ENCODE measurements at regions of chr2 and their contacts with region 1.

Region 1: GRCh38 chr2:20446917-20447436 is at the start of gene RHOB:
- DNase-seq: peak; percentile 97 to 99
- ATAC-seq: peak; percentile 73 to 84
- H3K4me3 ChIP-seq: peak within 1 kb of the TSS; percentile 86 to 99 (median 94)
- H3K27ac ChIP-seq: peak within 1 kb of the TSS; percentile 87 to 96 (median 91)
- H3K4me1 ChIP-seq: peaks cover 19 to 20% of the 10 kb centered on the region in 2 donors
- H3K27me3 ChIP-seq: no peaks in the 10 kb centered on the region
- CTCF ChIP-seq: peak in 1 of 5 experiments; percentile 4
- POLR2A ChIP-seq: peak; percentile 100
- total RNA-seq, gene RHOB: 696 to 1,267 (median 1,094) TPM

Region 2: GRCh38 chr2:19046986-19047780 is 1399.8 kb before region 1 on chr2:
- in situ Hi-C with region 1: no loop called
- intact Hi-C with region 1: loop called (anchors 5 kb)
- DNase-seq: peak; percentile 70 to 72
- ATAC-seq: peak; percentile 99 to 100
- H3K4me3 ChIP-seq: no peak overlapping the region
- H3K27ac ChIP-seq: peak overlapping the region; percentile 71 to 76 (median 72)
- H3K4me1 ChIP-seq: peaks cover 31 to 35% of the 10 kb centered on the region in 2 donors
- H3K27me3 ChIP-seq: no peaks in the 10 kb centered on the region
- CTCF ChIP-seq: no peak
- POLR2A ChIP-seq: no peak

Region 3: GRCh38 chr2:20398956-20399567 is 47.9 kb before region 1 on chr2:
- in situ Hi-C with region 1: no loop called
- intact Hi-C with region 1: no loop called
- DNase-seq: no peak
- ATAC-seq: no peak
- H3K4me3 ChIP-seq: no peak overlapping the region
- H3K27ac ChIP-seq: no peak overlapping the region
- H3K4me1 ChIP-seq: no peaks in the 10 kb centered on the region
- H3K27me3 ChIP-seq: no peaks in the 10 kb centered on the region
- CTCF ChIP-seq: no peak
- POLR2A ChIP-seq: no peak

Region 4: DNA sequence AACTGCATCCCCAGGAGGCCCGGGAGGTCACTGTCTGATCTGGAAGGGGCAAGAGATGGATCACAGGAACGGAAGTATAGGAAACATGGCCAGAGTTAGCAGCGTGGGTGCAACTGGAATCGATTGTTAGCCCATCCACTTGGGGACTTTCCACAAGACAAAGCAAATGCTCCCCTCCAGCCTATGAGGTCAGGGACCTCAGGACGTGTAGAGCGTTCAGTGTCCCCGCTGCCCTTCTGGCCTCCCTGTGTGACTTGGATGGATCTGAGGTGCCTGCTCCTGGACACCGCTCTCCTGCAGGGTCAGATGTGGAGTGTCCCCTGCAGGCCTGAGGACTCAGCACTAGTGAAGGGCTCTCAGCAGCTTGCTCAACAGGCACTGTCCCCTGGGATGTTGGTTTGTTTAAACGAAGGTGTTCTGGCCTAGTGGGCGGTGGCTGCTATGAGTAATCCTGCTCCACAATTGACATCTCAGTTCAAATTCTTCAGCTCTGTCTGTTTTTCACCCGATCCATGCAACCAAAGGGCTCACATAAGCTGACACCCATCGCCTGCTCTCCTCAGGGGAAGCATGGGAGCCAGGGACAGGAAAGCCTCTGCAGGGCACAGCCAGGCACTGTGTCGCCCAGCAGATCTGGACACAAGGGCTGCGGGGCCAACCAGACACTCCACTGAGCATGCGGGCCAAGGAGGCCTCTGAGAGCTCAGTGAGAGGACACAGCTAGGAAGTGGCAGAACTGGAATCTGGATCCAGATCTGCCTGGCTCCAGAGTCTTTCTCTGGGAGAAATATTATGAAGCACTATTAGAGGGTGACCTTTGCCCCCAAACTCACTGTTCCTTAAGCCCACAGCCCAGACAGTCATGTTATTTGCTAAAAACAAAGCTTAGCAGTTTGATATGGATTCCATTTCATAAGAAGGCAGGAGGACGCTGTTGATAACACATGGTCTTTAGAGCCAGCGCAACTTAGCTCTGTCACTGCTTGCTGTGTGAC is 78.4 kb after region 1 on chr2:
- in situ Hi-C with region 1: loop called in 2 of 4 experiments (anchors 10 kb)
- intact Hi-C with region 1: no loop called
- DNase-seq: peak; percentile 58 to 82
- ATAC-seq: peak; percentile 60 to 67
- H3K4me3 ChIP-seq: no peak overlapping the region
- H3K27ac ChIP-seq: peak overlapping the region; percentile 59 to 69 (median 64)
- H3K4me1 ChIP-seq: peaks cover 15 to 30% of the 10 kb centered on the region in 2 donors
- H3K27me3 ChIP-seq: no peaks in the 10 kb centered on the region
- CTCF ChIP-seq: no peak
- POLR2A ChIP-seq: no peak

Region 5: GRCh38 chr2:20617892-20618467 is 171.0 kb after region 1 on chr2:
- in situ Hi-C with region 1: no loop called
- intact Hi-C with region 1: loop called (anchors 5 kb)
- DNase-seq: peak; percentile 98 to 99
- ATAC-seq: peak; percentile 62 to 68
- H3K4me3 ChIP-seq: peak overlapping the region in 1 of 4 donors; percentile 1
- H3K27ac ChIP-seq: peak overlapping the region; percentile 87 to 95 (median 94)
- H3K4me1 ChIP-seq: peaks cover 72 to 92% of the 10 kb centered on the region in 2 donors
- H3K27me3 ChIP-seq: no peaks in the 10 kb centered on the region
- CTCF ChIP-seq: peak; percentile 69 to 81 (median 76)
- POLR2A ChIP-seq: peak; percentile 40 to 50

Region 6: GRCh38 chr2:20642055-20642971 is 195.3 kb after region 1 on chr2:
- in situ Hi-C with region 1: loop called (anchors 5 kb)
- intact Hi-C with region 1: loop called (anchors 1 kb)
- DNase-seq: peak; percentile 56 to 75
- ATAC-seq: peak; percentile 84 to 89
- H3K4me3 ChIP-seq: no peak overlapping the region
- H3K27ac ChIP-seq: peak overlapping the region in 3 of 4 donors; percentile 29 to 52 (median 42)
- H3K4me1 ChIP-seq: peaks cover 0 to 14% of the 10 kb centered on the region in 2 donors
- H3K27me3 ChIP-seq: no peaks in the 10 kb centered on the region
- CTCF ChIP-seq: peak; percentile 88 to 99 (median 97)
- POLR2A ChIP-seq: no peak

Measured in gastrocnemius medialis (tissue), 4 donors.